ENCODE measurements at regions of chr16 and their contacts with region 1.

Region 1: DNA sequence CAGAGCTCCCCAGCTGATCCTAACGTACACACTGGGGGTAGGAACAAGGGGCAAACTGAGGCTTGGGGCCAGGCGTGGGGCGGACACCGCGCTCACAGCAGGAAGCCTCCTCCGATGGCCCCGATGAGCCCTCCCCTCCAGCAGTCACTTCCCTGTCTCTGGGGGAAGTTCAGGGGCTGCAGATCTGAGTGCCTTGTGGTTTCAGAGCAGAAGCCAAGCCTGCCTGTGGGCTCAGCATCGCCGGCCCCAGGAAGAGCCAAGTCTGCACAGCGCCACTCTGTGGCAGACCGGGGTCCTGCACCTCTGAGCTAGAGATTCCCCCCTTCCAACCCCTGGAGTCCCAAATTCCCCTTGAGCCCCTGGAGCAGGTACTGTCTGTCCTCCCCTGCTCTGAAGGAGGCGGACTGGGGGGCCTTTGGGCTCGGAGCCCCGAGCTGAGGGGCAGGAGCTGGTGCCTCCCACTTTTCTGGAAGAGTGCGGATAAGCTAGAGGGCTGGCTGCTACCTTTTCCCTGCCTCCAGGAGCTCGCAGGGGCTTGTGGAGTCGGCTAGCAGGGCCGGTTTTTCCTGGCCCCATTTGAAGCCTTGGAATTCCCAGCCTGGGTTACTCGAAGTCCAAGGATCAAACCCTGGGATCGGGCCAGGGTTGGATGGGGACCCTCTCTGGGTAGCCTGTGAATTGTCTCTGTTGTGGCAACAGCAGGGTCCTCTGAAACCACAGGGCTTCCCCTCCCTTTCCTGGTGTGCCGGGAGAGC is 2.9 kb downstream of the GSE1 start:
- DNase-seq: peak; percentile 49
- H3K4me3 ChIP-seq: no peak overlapping the region
- H3K27ac ChIP-seq: no peak overlapping the region
- H3K4me1 ChIP-seq: peaks cover 9% of the 10 kb centered on the region
- H3K27me3 ChIP-seq: no peaks in the 10 kb centered on the region
- CTCF ChIP-seq: peak; percentile 90 to 97
- POLR2A ChIP-seq: no peak

Region 2: GRCh38 chr16:85245307-85246172 is 370.5 kb before region 1 on chr16:
- CTCF ChIA-PET with region 1: interaction called, 10 read pairs
- POLR2A ChIA-PET with region 1: no interaction called
- dilution Hi-C with region 1: no loop called
- intact Hi-C with region 1: no loop called
- DNase-seq: peak; percentile 53
- H3K4me3 ChIP-seq: no peak overlapping the region
- H3K27ac ChIP-seq: no peak overlapping the region
- H3K4me1 ChIP-seq: no peaks in the 10 kb centered on the region
- H3K27me3 ChIP-seq: no peaks in the 10 kb centered on the region
- CTCF ChIP-seq: peak; percentile 83 to 92
- POLR2A ChIP-seq: no peak

Region 3: GRCh38 chr16:85393674-85394483 is 222.2 kb before region 1 on chr16:
- CTCF ChIA-PET with region 1: interaction called, 35 read pairs
- POLR2A ChIA-PET with region 1: no interaction called
- dilution Hi-C with region 1: no loop called
- intact Hi-C with region 1: no loop called
- DNase-seq: no peak
- H3K4me3 ChIP-seq: no peak overlapping the region
- H3K27ac ChIP-seq: no peak overlapping the region
- H3K4me1 ChIP-seq: peaks cover 12% of the 10 kb centered on the region
- H3K27me3 ChIP-seq: no peaks in the 10 kb centered on the region
- CTCF ChIP-seq: peak; percentile 74 to 92
- POLR2A ChIP-seq: no peak

Region 4: GRCh38 chr16:85626191-85626981 is 10.4 kb after region 1 on chr16:
- CTCF ChIA-PET with region 1: interaction called, 32 read pairs
- POLR2A ChIA-PET with region 1: interaction called, 3 read pairs
- dilution Hi-C with region 1: no loop called
- intact Hi-C with region 1: no loop called
- DNase-seq: no peak
- H3K4me3 ChIP-seq: no peak overlapping the region
- H3K27ac ChIP-seq: no peak overlapping the region
- H3K4me1 ChIP-seq: no peaks in the 10 kb centered on the region
- H3K27me3 ChIP-seq: no peaks in the 10 kb centered on the region
- CTCF ChIP-seq: no peak
- POLR2A ChIP-seq: no peak

Region 5: DNA sequence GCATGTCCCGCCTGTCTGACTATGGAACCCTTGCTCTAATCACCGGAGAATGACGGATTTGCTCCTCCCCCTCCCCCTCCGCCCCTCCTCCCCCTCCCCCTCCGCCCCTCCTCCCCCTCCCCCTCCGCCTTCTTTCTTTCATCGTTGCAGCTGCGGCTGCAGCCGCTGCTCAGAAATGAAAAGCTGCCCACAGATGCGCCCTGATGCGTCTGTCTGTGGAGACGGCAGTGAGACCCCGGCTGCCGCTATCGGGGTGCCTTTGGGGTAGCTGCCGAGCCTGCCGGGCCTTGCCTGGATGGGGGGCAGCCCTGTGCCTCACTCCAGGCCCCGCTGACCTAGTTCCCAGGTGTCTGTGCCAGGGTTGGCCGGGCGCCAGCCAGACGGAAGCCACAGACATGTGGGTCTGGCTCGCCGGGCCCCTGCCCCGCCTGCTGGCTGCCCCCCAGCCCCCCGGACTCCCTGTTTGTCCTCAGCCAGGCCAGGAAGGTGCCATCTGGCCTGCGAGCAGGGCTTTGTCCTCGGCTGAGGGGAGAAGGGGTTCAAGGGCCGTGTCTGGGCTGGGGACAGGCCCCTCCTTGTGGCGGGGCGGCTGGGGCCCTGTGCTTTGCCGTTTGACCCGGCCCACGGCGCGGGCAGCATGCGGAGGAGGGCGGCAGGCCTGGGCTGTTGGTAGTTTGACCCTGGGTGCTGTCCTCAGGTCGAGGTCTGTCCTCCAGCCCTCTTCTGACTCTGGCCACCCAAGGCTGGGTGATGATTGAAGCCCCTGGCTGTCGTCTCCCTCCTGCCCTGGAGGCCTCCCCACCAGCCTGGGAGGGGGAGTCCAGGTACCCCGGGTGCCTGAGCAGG is 35.2 kb after region 1 on chr16:
- CTCF ChIA-PET with region 1: interaction called, 16 read pairs
- POLR2A ChIA-PET with region 1: no interaction called
- dilution Hi-C with region 1: no loop called
- intact Hi-C with region 1: no loop called
- DNase-seq: no peak
- H3K4me3 ChIP-seq: no peak overlapping the region
- H3K27ac ChIP-seq: no peak overlapping the region
- H3K4me1 ChIP-seq: no peaks in the 10 kb centered on the region
- H3K27me3 ChIP-seq: no peaks in the 10 kb centered on the region
- CTCF ChIP-seq: no peak
- POLR2A ChIP-seq: no peak